ENCODE measurements at regions of chr5 and their contacts with region 1.

Region 1: DNA sequence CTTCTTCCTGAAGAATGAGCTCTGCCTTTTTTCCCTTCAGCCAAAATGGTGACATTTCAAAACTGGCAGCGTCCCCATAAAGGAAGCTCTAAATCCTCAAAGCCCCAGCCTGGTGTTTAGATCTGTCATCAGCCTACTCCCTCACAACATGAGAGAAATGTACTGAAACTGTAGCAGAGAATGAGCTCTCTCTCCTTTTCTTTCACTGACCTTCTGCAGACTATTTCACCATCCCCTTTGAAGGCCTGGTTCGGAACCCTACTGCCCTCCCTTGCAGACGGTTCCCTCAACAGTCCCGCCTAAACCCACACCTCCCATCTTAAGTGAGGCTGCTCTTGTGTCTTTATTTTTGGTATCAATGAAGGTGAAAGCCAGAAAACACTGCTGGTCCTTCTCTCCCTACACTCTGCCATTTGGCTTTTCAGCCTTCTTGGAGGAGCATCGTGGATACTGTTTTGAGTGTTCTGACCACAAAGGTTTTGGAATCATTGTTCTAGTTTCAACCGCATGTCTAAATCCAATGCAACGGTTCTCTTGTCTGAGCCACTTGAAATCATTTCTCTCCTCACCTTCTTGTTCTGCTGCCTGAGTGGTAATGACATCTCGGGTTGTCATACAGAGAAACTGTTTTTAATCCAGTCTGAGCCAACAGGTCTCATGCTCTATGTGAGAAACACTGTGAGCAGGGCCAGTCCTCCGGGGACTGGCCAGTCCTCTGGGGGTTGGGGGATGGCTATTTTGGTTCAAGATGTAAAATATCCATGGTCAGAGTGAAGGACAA is 39.0 kb downstream of the ITK start:
- DNase-seq: peak; percentile 60
- ATAC-seq: peak; percentile 43
- H3K4me3 Mint-ChIP-seq: peak overlapping the region; percentile 6
- H3K27ac Mint-ChIP-seq: peak overlapping the region; percentile 92
- H3K4me1 Mint-ChIP-seq: peaks cover 92% of the 10 kb centered on the region
- H3K27me3 Mint-ChIP-seq: no peaks in the 10 kb centered on the region

Region 2: GRCh38 chr5:157204765-157205164 is 14.9 kb before region 1 on chr5:
- CTCF ChIA-PET with region 1: interaction called, 21 read pairs
- DNase-seq: no peak
- ATAC-seq: no peak
- H3K4me3 Mint-ChIP-seq: peak overlapping the region; percentile 11
- H3K27ac Mint-ChIP-seq: peak overlapping the region; percentile 86
- H3K4me1 Mint-ChIP-seq: peaks cover 89% of the 10 kb centered on the region
- H3K27me3 Mint-ChIP-seq: no peaks in the 10 kb centered on the region

Region 3: GRCh38 chr5:157271740-157272271 is 52.1 kb after region 1 on chr5:
- CTCF ChIA-PET with region 1: interaction called, 17 read pairs
- DNase-seq: peak; percentile 98
- ATAC-seq: peak; percentile 80
- H3K4me3 Mint-ChIP-seq: peak overlapping the region; percentile 64
- H3K27ac Mint-ChIP-seq: peak overlapping the region; percentile 97
- H3K4me1 Mint-ChIP-seq: peaks cover 78% of the 10 kb centered on the region
- H3K27me3 Mint-ChIP-seq: no peaks in the 10 kb centered on the region

Region 4: GRCh38 chr5:157283434-157283833 is 63.8 kb after region 1 on chr5:
- CTCF ChIA-PET with region 1: no interaction called
- DNase-seq: no peak
- ATAC-seq: peak; percentile 84
- H3K4me3 Mint-ChIP-seq: no peak overlapping the region
- H3K27ac Mint-ChIP-seq: peak overlapping the region; percentile 78
- H3K4me1 Mint-ChIP-seq: peaks cover 69% of the 10 kb centered on the region
- H3K27me3 Mint-ChIP-seq: no peaks in the 10 kb centered on the region

Measured in activated CD8-positive, alpha-beta memory T cell treated with anti-CD3 and anti-CD28 coated beads, Interleukin-2, amount 10 ng/mL, durations not matched to agents 7 days and 5 days (primary cell).